ENCODE measurements at regions of chr20 and their contacts with region 1.

Region 1: GRCh38 chr20:57573890-57574289 is 13.0 kb downstream of the PCK1 start:
- DNase-seq: no peak
- H3K4me3 ChIP-seq: no peak overlapping the region
- H3K27ac ChIP-seq: no peak overlapping the region
- H3K4me1 ChIP-seq: no peaks in the 10 kb centered on the region
- H3K27me3 ChIP-seq: peaks cover 84% of the 10 kb centered on the region

Region 2: GRCh38 chr20:57361212-57361915 is 212.5 kb before region 1 on chr20:
- in situ Hi-C with region 1: loop called (anchors 10 kb)
- DNase-seq: peak; percentile 94
- H3K4me3 ChIP-seq: peak overlapping the region; percentile 36
- H3K27ac ChIP-seq: no peak overlapping the region
- H3K4me1 ChIP-seq: peaks cover 7% of the 10 kb centered on the region
- H3K27me3 ChIP-seq: no peaks in the 10 kb centered on the region

Measured in GM23248 (cell line).